CD8-positive, alpha-beta T cell (primary cell): ENCODE measurements at regions of chr21 and their contacts with region 1.

Region 1: DNA sequence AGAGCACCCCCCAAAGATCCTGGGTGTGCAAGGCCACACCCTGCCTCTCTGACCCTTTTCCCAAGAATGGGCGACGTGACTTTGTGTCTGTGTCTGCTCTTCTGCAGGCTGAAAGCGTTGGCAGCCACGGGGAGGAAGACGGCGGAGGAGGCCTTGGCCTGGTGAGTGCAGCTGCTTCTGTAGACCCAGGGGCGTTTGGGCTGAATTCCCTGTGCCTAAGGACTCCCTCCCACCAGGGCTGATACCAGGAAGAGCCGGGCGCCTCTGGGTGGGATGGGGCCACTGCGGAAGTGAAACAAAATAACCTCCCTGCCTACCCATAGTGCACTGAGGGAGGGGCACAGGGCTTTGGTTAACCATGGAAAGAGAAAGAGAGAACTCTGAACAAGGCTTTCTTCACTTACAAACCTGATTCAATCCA is 2.5 kb downstream of the UBASH3A start:
- DNase-seq: peak in 7 of 9 experiments; percentile 25 to 82 (median 64)
- ATAC-seq: peak; percentile 59
- H3K4me3 ChIP-seq: peak overlapping the region; percentile 74 to 93
- H3K4me3 Mint-ChIP-seq: peak overlapping the region; percentile 89
- H3K27ac ChIP-seq: peak overlapping the region; percentile 71 to 86
- H3K27ac Mint-ChIP-seq: peak overlapping the region; percentile 94
- H3K4me1 ChIP-seq: peaks cover 64% of the 10 kb centered on the region
- H3K4me1 Mint-ChIP-seq: peaks cover 70% of the 10 kb centered on the region
- H3K27me3 ChIP-seq: peaks cover 0 to 2% of the 10 kb centered on the region in 2 experiments
- H3K27me3 Mint-ChIP-seq: no peaks in the 10 kb centered on the region
- CTCF ChIP-seq: no peak

Region 2: GRCh38 chr21:42392721-42393442 is 13.3 kb before region 1 on chr21:
- CTCF ChIA-PET with region 1: interaction called, 11 read pairs
- POLR2A ChIA-PET with region 1: interaction called, 49 read pairs
- intact Hi-C with region 1: loop called in 1 of 2 experiments (anchors 2 kb)
- DNase-seq: peak in 4 of 9 experiments; percentile 33 to 79 (median 44)
- ATAC-seq: peak; percentile 92
- H3K4me3 ChIP-seq: peak overlapping the region; percentile 5 to 29
- H3K4me3 Mint-ChIP-seq: peak overlapping the region; percentile 66
- H3K27ac ChIP-seq: peak overlapping the region; percentile 28 to 33
- H3K27ac Mint-ChIP-seq: peak overlapping the region; percentile 89
- H3K4me1 ChIP-seq: peaks cover 31% of the 10 kb centered on the region
- H3K4me1 Mint-ChIP-seq: peaks cover 67% of the 10 kb centered on the region
- H3K27me3 ChIP-seq: no peaks in the 10 kb centered on the region
- H3K27me3 Mint-ChIP-seq: no peaks in the 10 kb centered on the region
- CTCF ChIP-seq: no peak